HEK293 (cell line): ENCODE measurements at regions of chr22 and their contacts with region 1.

Region 1: DNA sequence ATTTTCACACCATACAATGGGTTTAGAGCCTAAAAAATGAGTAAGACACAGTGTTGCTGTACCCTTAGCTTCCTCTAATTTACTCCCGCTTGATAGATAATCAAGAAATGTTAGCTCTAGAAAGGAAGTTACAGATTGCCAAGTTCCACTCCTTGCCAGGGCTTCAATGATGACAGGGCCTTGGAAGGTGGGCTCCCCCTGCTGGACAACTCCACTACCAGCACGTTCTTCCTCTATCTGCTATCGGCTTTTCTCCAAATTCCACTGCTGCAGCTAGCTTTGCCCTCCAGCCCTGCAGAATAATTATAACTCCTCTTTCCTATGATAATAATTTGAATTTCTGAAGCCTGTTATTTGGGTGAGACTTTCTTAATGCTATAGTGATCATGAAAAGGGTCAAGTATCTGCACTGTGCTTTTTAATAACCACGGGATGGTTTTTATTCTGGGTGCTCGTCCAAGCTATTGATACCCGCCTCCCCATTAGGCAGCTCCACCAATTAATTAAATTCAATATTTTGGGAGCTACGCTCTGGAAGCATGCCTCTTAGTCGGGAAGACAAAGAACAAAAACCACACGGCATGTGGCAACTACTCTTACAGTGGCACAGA is 9.0 kb downstream of the SYN3 start:
- H3K4me3 ChIP-seq: no peak overlapping the region
- H3K27ac ChIP-seq: no peak overlapping the region
- H3K4me1 ChIP-seq: no peaks in the 10 kb centered on the region; the same call in 1 of the 2 replicates
- CTCF ChIP-seq: peak; percentile 50; the same call in 1 of the 2 replicates

Region 2: DNA sequence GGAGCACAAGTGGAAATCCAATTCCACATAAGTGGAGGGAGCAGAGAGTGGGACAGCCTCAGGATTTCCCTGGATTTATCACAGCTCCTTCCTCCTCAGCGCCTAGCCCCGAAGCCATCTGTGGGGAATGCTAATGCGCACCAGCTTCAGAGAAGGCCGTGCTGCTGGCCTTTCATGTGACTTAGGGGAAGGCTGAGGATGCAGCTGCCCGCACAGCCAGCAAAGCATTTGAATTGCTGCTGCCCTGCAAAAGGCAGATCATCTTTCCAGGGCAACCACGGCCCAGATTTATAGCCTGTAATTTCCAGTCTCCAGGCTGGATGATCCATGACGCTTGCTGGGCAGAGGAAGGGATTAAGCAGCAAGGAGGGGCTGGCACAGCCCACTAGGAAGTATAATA is 21.0 kb before region 1 on chr22:
- CTCF ChIA-PET with region 1: interaction called, 271 read pairs
- POLR2A ChIA-PET with region 1: interaction called, 6 read pairs
- H3K4me3 ChIP-seq: no peak overlapping the region
- H3K27ac ChIP-seq: no peak overlapping the region
- H3K4me1 ChIP-seq: no peaks in the 10 kb centered on the region
- CTCF ChIP-seq: no peak

Region 3: DNA sequence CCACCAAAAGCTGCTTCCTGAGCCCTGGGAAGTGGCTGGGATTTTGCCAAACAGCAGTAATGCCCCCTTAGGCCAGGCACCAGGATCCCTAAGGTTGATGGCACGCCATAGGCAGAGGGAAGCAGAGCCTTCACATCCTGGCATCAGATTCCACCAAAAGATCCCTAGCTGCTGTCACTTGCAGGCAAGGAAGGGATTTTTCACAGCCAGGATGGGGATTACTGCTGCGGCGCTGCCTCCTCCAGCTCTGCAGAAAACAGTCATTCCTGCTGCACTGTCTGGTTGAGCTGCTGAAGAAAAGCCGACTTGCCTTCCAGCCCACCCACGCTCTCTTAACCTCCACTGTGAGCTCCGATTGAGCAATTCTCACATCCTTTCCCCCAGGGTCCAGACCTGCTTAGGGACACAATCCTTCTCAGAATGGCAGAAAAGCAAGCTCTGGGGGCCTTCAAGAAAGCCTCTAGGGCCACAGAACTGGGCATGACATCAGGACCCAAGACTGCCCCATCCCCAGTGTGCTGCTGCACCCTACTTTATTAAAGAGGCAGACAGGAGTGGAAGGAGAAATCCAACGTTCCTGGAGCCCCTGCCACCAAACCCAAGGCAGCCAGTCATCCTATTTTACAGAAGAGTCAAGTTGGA is 11.0 kb before region 1 on chr22:
- CTCF ChIA-PET with region 1: interaction called, 27 read pairs
- POLR2A ChIA-PET with region 1: no interaction called
- H3K4me3 ChIP-seq: no peak overlapping the region
- H3K27ac ChIP-seq: no peak overlapping the region
- H3K4me1 ChIP-seq: no peaks in the 10 kb centered on the region
- CTCF ChIP-seq: no peak

Region 4: DNA sequence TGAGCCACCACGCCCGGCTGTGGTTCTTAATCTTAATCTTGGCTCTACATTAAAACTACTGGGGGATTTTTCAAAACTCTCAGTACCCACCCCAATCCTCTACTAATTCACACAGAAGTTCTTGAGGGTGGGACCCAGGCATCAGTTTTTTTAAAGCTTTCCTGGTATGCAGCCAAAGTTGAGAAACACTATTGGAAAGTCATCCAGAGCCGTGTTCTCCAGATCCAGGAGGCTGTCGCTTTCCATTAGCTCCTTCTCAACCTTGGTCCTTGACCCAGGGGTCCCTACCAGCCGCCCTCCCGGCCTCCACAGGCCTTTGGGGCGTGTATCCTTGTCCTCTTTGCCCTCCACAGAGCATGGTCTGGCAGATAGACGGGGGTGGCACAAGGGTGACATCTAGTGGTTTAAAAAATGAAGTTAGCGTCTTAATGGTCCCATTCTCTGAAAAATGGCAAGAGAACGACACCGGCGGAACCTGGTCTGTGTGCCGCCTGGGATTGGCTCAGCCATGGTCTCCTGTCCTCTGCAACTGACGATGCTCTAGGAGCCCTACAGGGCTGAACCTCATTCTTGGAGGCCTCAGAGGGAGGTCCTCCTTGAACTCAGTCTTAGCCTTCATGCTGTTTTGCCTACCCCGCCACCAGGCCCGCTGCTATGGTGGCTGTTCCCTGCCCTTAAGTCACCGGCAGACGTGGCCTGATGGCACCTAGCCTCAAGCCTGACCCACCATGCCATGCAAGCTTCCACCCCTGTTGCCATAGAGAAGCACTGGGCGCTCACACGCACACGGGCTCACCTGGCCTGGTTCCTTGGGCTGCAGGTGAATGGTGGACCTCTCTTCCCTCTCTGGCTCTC is 160.9 kb after region 1 on chr22:
- CTCF ChIA-PET with region 1: interaction called, 10 read pairs
- POLR2A ChIA-PET with region 1: no interaction called
- H3K4me3 ChIP-seq: no peak overlapping the region
- H3K27ac ChIP-seq: no peak overlapping the region
- H3K4me1 ChIP-seq: no peaks in the 10 kb centered on the region
- CTCF ChIP-seq: peak; percentile 53; the same call in 1 of the 2 replicates